Breast epithelium (tissue), 4 donors: ENCODE measurements at regions of chr10 and their contacts with region 1.

Region 1: GRCh38 chr10:97154781-97155180 is 31.0 kb downstream of the SLIT1 start:
- DNase-seq: no peak
- H3K4me3 ChIP-seq: no peak overlapping the region
- H3K27ac ChIP-seq: no peak overlapping the region
- H3K4me1 ChIP-seq: no peaks in the 10 kb centered on the region
- H3K27me3 ChIP-seq: no peaks in the 10 kb centered on the region
- CTCF ChIP-seq: no peak
- POLR2A ChIP-seq: no peak

Region 2: GRCh38 chr10:97117372-97117771 is 37.4 kb before region 1 on chr10:
- intact Hi-C with region 1: no loop called
- DNase-seq: no peak
- H3K4me3 ChIP-seq: no peak overlapping the region
- H3K27ac ChIP-seq: no peak overlapping the region
- H3K4me1 ChIP-seq: no peaks in the 10 kb centered on the region
- H3K27me3 ChIP-seq: no peaks in the 10 kb centered on the region
- CTCF ChIP-seq: no peak
- POLR2A ChIP-seq: no peak

Region 3: GRCh38 chr10:97131666-97132065 is 23.1 kb before region 1 on chr10:
- intact Hi-C with region 1: loop called (anchors 1 kb)
- DNase-seq: no peak
- H3K4me3 ChIP-seq: no peak overlapping the region
- H3K27ac ChIP-seq: no peak overlapping the region
- H3K4me1 ChIP-seq: no peaks in the 10 kb centered on the region
- H3K27me3 ChIP-seq: no peaks in the 10 kb centered on the region
- CTCF ChIP-seq: no peak
- POLR2A ChIP-seq: no peak

Region 4: DNA sequence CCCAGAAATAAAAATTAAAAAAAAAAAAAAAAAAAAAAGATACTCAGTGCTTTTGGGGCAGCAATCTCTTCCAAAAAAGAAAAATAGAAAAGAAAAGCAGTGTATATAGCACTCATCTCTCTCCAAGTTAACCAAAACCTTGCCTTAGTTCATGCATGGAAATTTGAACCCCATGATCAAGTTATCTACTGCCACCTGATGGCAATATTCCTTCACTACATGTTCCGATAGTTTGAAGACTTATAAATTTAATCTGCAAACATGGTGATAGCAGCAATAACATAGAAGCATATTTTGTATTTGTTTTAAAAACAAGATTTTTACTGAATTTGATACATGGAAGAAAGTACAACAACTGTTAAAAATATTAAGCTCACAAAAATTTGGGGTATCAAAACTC is 79.6 kb after region 1 on chr10:
- intact Hi-C with region 1: no loop called
- DNase-seq: no peak
- H3K4me3 ChIP-seq: no peak overlapping the region
- H3K27ac ChIP-seq: no peak overlapping the region
- H3K4me1 ChIP-seq: no peaks in the 10 kb centered on the region
- H3K27me3 ChIP-seq: no peaks in the 10 kb centered on the region
- CTCF ChIP-seq: peak in 1 of 3 donors; percentile 36
- POLR2A ChIP-seq: no peak